BJ (cell line): ENCODE measurements at regions of chr18 and their contacts with region 1.

Region 1: DNA sequence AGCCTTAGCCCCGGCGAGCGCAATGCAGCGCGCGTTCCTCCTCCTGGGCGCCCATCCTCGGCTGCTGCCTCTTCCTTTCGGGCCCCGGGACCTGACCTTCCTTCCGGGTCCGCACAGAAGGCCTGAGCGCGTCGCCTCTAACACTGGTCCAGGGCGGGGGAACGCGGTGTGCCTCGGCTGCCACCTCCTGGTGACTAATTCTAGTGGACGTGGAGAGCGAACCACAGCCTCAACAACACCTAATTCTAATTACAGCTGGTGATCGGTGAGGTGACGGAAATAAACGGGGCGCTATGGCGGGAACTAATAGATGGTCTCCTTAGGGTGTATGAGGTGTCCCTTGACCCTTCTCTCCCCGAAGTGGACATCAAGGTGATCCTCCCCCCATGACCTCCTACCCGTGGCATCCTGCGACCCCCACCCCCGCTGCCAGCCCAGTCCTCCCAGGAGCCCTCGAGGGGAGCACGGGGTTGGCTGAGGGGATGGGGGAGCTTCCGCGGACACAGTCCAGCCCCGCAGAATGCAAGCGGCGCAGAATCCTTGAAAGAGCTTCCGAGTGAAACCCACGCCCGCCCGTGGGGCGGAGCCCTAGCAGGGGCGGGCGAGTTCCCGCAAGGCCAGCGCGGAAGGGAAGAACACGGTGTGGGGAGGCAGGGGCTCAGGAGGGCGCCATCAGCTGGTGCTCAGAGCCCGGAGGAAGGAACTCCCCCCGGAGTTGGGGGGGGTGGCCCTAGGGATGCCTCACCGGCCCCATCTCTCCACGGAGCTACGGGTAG is 12.8 kb upstream of the HMSD start:
- DNase-seq: peak; percentile 9
- H3K4me3 ChIP-seq: peak overlapping the region; percentile 85
- H3K27me3 ChIP-seq: peaks cover 2% of the 10 kb centered on the region; the same call in 1 of the 2 replicates
- CTCF ChIP-seq: peak; percentile 74

Region 2: DNA sequence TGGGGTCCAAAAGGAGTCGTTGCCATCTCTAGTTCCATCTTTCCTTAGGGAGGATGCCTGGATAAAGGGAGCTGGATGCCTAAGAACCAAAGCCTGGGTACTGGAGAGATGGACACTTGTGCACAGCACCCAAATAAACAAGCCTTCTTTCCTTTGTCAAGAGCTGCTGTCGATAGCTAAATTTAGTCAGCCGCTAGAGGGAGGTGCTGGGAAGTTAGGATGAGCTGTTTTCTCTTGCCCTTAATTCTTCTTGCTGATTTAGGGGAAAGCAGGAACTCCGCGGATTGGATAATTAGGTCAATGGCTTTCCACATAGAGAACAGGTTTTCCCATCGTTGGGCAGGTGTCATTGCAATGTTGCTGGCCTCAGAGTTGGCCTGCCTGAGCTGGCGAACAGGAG is 425.1 kb before region 1 on chr18:
- CTCF ChIA-PET with region 1: interaction called, 43 read pairs
- POLR2A ChIA-PET with region 1: no interaction called
- DNase-seq: no peak
- H3K4me3 ChIP-seq: no peak overlapping the region
- H3K27me3 ChIP-seq: no peaks in the 10 kb centered on the region
- CTCF ChIP-seq: peak; percentile 79

Region 3: DNA sequence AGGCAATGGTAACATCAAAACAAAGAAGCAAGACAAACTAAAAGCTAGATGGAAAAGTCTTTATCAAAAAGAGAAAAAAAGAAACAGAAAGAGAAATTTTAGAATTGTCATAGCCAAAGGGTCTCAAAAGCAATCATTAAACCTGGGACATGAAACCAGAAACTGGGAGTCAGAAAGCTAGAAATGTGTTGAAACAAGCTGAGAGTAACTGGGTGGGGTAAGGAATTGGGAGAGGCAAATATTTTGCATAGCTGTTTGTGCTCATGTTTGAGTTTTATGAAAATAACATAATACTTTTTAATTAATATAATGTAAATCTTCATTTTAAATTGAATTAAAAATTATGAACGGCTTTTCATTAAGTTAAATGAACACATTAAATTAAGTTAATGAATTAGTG is 69.0 kb before region 1 on chr18:
- CTCF ChIA-PET with region 1: interaction called, 10 read pairs
- POLR2A ChIA-PET with region 1: no interaction called
- DNase-seq: no peak
- H3K4me3 ChIP-seq: no peak overlapping the region
- H3K27me3 ChIP-seq: no peaks in the 10 kb centered on the region
- CTCF ChIP-seq: no peak

Region 4: GRCh38 chr18:63924551-63924950 is 11.8 kb before region 1 on chr18:
- CTCF ChIA-PET with region 1: interaction called, 31 read pairs
- POLR2A ChIA-PET with region 1: no interaction called
- DNase-seq: peak; percentile 56
- H3K4me3 ChIP-seq: no peak overlapping the region
- H3K27me3 ChIP-seq: no peaks in the 10 kb centered on the region
- CTCF ChIP-seq: no peak

Region 5: DNA sequence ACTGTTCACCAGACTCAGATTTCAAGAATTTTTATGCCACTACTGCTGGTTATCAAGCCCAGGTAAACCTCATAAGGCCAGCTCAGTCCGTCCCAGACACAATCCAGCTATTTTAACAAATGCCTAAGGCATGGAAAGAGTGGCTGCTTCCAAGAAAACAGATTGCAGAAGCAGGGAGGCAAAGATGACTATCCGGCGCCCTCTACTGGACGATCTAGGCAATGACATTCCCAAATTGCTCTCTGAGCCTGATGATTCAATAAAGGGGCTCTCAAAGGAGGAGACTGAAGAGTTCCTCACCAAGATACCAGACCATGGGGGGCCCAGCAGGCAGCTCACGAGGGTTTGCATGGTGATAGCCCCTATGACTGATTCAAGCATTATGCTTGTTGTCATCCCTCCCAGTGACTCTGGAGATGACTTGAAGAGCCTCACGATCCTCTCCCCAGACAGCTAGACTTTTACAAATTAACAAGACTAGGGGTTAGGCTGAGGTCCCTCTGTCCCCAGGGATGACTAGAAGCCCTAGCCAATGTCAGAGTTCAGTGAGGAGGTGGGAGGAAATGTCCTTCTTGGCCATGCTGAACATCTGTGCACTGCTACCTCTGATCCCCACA is 58.5 kb after region 1 on chr18:
- CTCF ChIA-PET with region 1: interaction called, 30 read pairs
- POLR2A ChIA-PET with region 1: no interaction called
- DNase-seq: peak; percentile 14
- H3K4me3 ChIP-seq: no peak overlapping the region
- H3K27me3 ChIP-seq: no peaks in the 10 kb centered on the region
- CTCF ChIP-seq: peak; percentile 90